PC-3 (cell line): ENCODE measurements at regions of chr19 and their contacts with region 1.

Region 1: GRCh38 chr19:12610540-12611360 is at the starts of genes ZNF490 and ZNF791:
- DNase-seq: peak; percentile 100
- ATAC-seq: peak; percentile 99
- H3K4me3 ChIP-seq: peak within 1 kb of the TSS; percentile 94
- H3K27ac ChIP-seq: peak within 1 kb of the TSS; percentile 48
- H3K4me1 ChIP-seq: peaks cover 10% of the 10 kb centered on the region
- H3K27me3 ChIP-seq: no peaks in the 10 kb centered on the region
- CTCF ChIP-seq: peak; percentile 28; the same call in 1 of the 2 replicates
- total RNA-seq, gene ZNF490: 6.9 and 10.7 TPM in 2 replicates
- total RNA-seq, gene ZNF791: 15.8 and 26.3 TPM in 2 replicates

Region 2: DNA sequence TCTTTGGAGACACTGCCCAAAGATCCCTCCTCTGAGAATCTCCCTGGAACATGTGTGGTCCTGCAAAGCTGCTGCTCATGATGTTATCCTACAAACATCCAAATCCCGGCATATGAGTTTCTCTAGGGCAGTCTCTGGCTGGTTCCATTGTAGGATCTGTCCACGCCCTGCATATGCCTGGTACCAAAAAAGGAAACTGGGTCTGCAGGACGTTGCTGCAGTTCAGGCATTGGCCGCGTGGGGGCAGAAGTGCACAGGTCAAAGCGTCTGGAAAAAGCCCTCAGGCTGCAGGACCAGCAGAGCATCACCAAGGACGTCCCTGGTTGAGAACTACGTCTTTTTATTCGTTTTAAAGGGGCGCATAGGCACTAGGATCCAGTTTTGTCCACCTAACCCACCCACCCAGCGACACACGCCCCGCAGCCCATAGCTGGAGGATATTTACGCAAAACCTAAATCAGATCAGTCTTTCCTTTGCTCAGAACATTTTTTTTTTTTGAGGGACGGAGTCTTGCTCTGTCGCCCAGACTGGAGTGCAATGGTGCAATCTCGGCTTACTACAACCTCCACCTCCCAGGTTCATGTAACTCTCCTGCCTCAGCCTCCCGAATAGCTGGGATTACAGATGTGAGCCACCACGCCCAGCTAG is 46.6 kb before region 1 on chr19:
- CTCF ChIA-PET with region 1: no interaction called
- POLR2A ChIA-PET with region 1: no interaction called
- intact Hi-C with region 1: loop called (anchors 2 kb)
- DNase-seq: peak; percentile 96
- ATAC-seq: peak; percentile 95
- H3K4me3 ChIP-seq: peak overlapping the region; percentile 14; the same call in 1 of the 2 replicates
- H3K27ac ChIP-seq: no peak overlapping the region
- H3K4me1 ChIP-seq: 0 out of 2 replicates have a peak, but pooled peaks cover 3% of the 10 kb centered on the region
- H3K27me3 ChIP-seq: no peaks in the 10 kb centered on the region
- CTCF ChIP-seq: peak; percentile 98

Region 3: GRCh38 chr19:12666265-12667048 is 55.7 kb after region 1 on chr19 and contains the starts of genes MAN2B1 and WDR83:
- CTCF ChIA-PET with region 1: no interaction called
- POLR2A ChIA-PET with region 1: no interaction called
- intact Hi-C with region 1: loop called (anchors 2 kb)
- DNase-seq: peak; percentile 85
- ATAC-seq: peak; percentile 80
- H3K4me3 ChIP-seq: peak within 1 kb of the TSS; percentile 88
- H3K27ac ChIP-seq: no peak within 1 kb of the TSS
- H3K4me1 ChIP-seq: peaks cover 32% of the 10 kb centered on the region
- H3K27me3 ChIP-seq: no peaks in the 10 kb centered on the region
- CTCF ChIP-seq: no peak
- total RNA-seq, gene MAN2B1: 62.9 and 67.5 TPM in 2 replicates
- total RNA-seq, gene WDR83: 39.5 and 53.5 TPM in 2 replicates